ENCODE measurements at regions of chr7 and their contacts with region 1.

Region 1: DNA sequence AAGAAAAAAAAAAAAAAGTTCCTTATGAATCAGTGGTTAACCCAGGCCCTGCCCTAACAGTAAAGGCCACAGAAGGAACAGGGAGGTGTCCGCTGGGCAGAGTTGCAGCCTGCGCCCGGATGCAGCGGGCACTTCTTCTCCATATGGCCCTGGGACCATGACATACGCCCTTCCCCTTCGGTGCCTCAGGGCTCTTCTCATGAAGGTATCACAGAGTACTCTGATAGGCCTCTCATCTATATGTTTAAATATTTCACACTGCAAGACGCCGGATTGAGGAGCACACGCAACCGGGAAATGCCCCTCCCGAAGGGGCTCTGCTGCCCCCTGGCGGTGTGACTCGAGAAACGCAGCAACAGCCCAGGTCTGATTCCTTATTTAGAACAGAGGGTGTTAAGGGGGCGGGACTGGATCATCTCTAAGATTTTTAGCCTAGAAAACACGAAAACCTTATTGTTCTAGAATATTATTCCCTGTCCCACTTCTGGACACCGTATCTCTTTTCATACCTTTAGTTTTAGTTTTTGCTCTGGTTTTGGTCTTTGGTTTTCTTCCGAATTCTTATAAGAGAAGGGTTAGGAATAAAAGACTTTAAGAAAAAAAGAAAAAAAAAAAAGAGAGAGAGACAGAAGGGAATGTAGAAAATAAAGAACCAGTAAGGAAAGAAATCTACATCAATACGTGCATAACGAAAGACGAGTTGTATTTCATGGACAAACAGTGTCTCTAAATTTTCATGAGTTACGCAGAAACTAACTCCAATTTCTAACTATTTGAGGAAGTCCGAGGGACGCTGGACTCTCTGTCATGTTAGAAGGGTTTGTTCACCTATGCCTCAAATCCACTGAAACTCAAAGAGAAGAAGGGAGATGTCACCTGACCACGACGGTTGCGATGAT is 12.0 kb downstream of the DAGLB start:
- DNase-seq: peak; percentile 82 to 95 (median 90)
- ATAC-seq: peak; percentile 86 to 92
- H3K4me3 Mint-ChIP-seq: peak overlapping the region; percentile 75 to 88 (median 84)
- H3K27ac Mint-ChIP-seq: peak overlapping the region; percentile 80 to 96 (median 92)
- H3K4me1 Mint-ChIP-seq: peaks cover 21 to 59% (median 45%) of the 10 kb centered on the region in 4 donors
- H3K27me3 Mint-ChIP-seq: no peaks in the 10 kb centered on the region

Region 2: DNA sequence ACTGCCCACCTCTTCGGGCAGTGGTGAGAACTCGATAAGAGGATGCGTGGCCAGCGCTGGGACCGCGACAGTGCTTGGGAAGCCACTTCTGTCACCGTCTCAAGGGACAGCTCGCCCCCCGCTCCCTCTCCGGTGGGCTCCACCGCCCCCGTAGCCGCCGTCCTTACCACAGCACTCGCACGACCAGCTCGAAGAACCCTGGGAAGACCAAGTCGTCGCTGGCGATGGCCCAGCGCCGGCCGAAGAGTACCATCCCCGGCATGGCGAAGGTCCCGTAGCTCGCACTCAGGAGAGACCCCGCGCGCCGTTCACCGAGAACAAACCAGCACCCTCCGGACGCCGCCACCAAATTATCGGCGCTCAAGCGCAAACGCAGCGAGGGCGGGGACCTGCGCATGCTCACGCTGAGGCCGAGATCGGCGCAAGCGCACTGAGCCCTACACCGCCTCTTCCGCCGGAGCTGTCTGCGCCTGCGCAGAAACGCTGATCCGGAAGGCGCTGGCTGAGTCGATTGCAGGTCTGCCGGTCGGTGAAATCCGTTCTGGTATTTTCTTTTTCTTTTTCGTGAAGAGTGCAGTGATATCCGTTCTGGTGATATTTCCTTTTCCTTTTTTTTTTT is 12.0 kb after region 1 on chr7 and contains the start of gene DAGLB:
- POLR2A ChIA-PET with region 1: interaction called, 31 read pairs
- DNase-seq: peak; percentile 92 to 98 (median 96)
- ATAC-seq: peak; percentile 85 to 90
- H3K4me3 Mint-ChIP-seq: peak within 1 kb of the TSS; percentile 93 to 98 (median 94)
- H3K27ac Mint-ChIP-seq: peak within 1 kb of the TSS; percentile 93 to 98 (median 95)
- H3K4me1 Mint-ChIP-seq: peaks cover 12 to 49% (median 39%) of the 10 kb centered on the region in 4 donors
- H3K27me3 Mint-ChIP-seq: no peaks in the 10 kb centered on the region
- polyA plus RNA-seq, gene DAGLB: 7.2 to 11.9 (median 7.6) TPM

Measured in naive thymus-derived CD8-positive, alpha-beta T cell (primary cell).